ENCODE measurements at regions of chr3 and their contacts with region 1.

Region 1: DNA sequence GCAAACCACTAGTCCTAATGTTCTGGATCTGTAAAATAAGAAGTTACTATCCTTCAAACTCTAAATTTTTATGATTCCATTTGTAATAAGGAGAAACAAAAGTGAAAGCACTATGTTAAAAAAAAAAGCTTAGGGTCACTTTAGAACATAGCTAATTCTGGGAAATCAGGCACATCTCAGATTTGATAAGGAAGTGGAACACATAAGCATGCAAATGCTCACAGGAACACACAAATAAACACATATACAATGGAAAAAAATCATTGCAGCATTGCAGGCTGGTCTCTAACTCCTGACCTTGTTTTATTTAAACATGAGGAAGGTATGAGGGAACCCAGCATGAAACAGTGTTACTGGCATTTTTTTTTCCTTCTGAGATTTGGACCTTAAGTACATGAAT is 63.2 kb upstream of the TNFSF10 start:
- DNase-seq: no peak

Region 2: GRCh38 chr3:172511783-172512762 is 74.4 kb before region 1 on chr3:
- intact Hi-C with region 1: loop called (anchors 5 kb)
- DNase-seq: peak; percentile 94

Region 3: DNA sequence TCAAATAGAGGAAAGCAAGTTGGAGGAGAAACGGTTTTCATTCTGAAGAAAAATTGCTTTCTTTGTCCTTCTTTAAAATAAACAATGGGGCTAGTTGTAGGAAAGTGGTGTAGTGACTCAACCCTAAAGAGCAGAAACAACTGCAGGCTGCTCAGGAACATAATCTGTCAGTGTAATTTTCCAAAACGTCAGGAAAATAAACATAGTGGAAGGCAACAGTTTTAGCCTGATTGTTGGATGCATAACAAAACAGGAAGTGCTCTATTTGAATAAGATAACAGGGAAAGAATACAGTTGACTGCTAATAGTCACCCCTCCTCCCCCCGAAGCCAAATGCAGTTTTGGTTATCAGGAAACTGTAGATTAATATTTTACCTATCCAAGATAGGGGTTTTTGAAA is 331.7 kb after region 1 on chr3:
- intact Hi-C with region 1: no loop called
- DNase-seq: no peak

Measured in cardiac septum (tissue), 1 donor.